Posterior vena cava (tissue), 2 donors: ENCODE measurements at regions of chr7 and their contacts with region 1.

Region 1: DNA sequence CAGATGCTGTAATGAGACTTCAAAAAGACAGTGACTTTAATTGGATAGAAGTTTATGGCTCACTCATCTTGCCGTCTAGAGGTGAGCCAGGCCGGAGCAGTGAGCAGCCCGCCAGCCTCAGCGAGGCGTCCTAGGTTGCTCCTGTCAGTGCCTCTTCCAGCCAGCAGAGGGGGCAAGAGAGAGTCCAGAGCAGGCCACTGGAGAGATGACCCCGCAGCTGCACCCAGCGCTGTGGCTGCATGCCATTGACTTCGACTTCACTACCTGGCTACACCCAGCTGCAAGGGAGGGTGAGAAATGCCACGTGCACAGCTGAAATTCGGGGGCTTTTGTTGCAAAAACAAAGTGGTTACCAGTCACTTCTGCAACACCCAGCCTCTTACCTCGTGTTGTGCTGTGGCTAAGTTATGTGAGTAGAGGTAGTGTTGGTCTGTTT is 26.5 kb downstream of the NUB1 start:
- DNase-seq: peak; percentile 94

Region 2: GRCh38 chr7:151448261-151449252 is 80.4 kb after region 1 on chr7:
- intact Hi-C with region 1: loop called (anchors 5 kb)
- DNase-seq: peak; percentile 89

Region 3: GRCh38 chr7:151459726-151460473 is 91.7 kb after region 1 on chr7:
- intact Hi-C with region 1: no loop called
- DNase-seq: peak; percentile 94